ENCODE measurements at regions of chr6 and their contacts with region 1.

Region 1: DNA sequence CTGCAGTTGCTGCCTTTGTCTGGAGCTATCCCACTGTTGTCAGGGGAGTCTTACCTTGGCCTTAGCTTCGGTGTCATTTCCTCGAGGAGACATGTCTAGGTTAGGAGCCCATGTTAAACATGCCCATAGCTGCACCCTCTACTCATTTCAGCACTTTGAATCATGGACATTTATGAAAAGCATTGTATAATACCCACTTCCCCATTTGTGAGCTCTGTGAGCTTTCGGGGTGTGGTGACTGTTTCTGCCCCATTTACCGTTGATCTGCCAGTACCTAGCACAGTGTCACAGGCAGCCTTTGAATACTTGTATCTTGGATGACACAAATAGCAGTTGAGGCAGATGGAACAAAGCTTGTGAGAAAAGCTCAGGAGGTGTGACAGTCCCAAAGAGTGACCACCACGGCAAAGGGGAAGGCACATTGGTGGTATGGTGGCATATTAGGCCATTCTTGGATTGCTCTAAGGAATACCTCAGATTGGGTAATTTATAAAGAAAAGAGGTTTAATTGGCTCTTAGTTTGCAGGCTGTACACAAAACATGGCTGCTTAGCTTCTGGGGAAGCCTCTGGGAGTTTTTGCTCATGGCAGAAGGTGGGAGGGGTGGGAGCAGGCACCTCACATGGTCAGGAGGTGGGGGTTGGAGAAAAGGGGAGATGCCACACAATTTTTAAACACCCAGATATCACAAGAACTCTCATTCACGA is 42.0 kb downstream of the JARID2 start:
- DNase-seq: peak in 2 of 3 donors; percentile 76 to 88
- H3K4me3 ChIP-seq: peak overlapping the region in 3 of 7 experiments; percentile 21 to 47 (median 32)
- H3K27ac ChIP-seq: peak overlapping the region; percentile 4 to 67
- H3K4me1 ChIP-seq: peaks cover 20 to 71% (median 46%) of the 10 kb centered on the region in 4 experiments
- H3K27me3 ChIP-seq: no peaks in the 10 kb centered on the region

Region 2: DNA sequence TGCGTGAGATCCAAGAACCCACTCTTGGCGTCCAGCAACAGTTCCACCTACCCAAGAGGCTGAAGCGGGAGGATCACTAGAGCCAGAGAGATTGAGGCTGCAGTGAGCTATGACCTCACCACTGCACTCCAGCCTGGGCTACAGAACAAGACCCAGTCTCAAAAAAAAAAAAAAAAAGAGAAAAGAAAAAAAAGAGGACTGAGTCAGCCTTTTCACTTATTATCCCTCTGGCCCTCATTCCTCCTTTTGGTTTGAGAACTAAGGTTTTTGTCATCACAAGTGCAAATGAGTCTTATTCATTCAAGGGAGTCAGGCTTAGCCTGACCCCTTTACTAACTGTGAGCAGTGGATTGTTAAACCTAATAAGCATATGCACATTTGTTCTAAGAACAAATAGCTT is 79.9 kb before region 1 on chr6:
- CTCF ChIA-PET with region 1: no interaction called
- POLR2A ChIA-PET with region 1: no interaction called
- DNase-seq: peak in 1 of 3 donors; percentile 15
- H3K4me3 ChIP-seq: no peak overlapping the region
- H3K27ac ChIP-seq: no peak overlapping the region
- H3K4me1 ChIP-seq: peaks cover 0 to 7% (median 2%) of the 10 kb centered on the region in 4 experiments
- H3K27me3 ChIP-seq: no peaks in the 10 kb centered on the region

Region 3: GRCh38 chr6:15276036-15276985 is 11.5 kb before region 1 on chr6:
- CTCF ChIA-PET with region 1: interaction called, 13 read pairs
- POLR2A ChIA-PET with region 1: no interaction called
- DNase-seq: no peak
- H3K4me3 ChIP-seq: peak overlapping the region in 2 of 7 experiments; percentile 36 to 38
- H3K27ac ChIP-seq: peak overlapping the region; percentile 9 to 57
- H3K4me1 ChIP-seq: peaks cover 25 to 78% (median 57%) of the 10 kb centered on the region in 4 experiments
- H3K27me3 ChIP-seq: no peaks in the 10 kb centered on the region

Region 4: GRCh38 chr6:15305496-15305895 is 17.7 kb after region 1 on chr6:
- CTCF ChIA-PET with region 1: interaction called, 10 read pairs
- POLR2A ChIA-PET with region 1: no interaction called
- DNase-seq: no peak
- H3K4me3 ChIP-seq: peak overlapping the region in 1 of 7 experiments; percentile 41
- H3K27ac ChIP-seq: peak overlapping the region in 1 of 2 experiments; percentile 31
- H3K4me1 ChIP-seq: peaks cover 54 to 95% (median 87%) of the 10 kb centered on the region in 4 experiments
- H3K27me3 ChIP-seq: no peaks in the 10 kb centered on the region